Naive thymus-derived CD4-positive, alpha-beta T cell (primary cell): ENCODE measurements at regions of chr19 and their contacts with region 1.

Region 1: GRCh38 chr19:13212759-13213330 is 62.6 kb downstream of the IER2 start:
- DNase-seq: peak; percentile 47 to 72 (median 69)
- ATAC-seq: peak; percentile 58
- H3K4me3 ChIP-seq: no peak overlapping the region
- H3K4me3 Mint-ChIP-seq: peak overlapping the region in 6 of 10 donors; percentile 2 to 41 (median 20)
- H3K27ac ChIP-seq: no peak overlapping the region
- H3K27ac Mint-ChIP-seq: peak overlapping the region; percentile 5 to 85 (median 65)
- H3K4me1 ChIP-seq: peaks cover 0 to 6% of the 10 kb centered on the region in 2 donors
- H3K4me1 Mint-ChIP-seq: peaks cover 14 to 31% (median 26%) of the 10 kb centered on the region in 7 donors
- H3K27me3 ChIP-seq: no peaks in the 10 kb centered on the region
- H3K27me3 Mint-ChIP-seq: no peaks in the 10 kb centered on the region

Region 2: DNA sequence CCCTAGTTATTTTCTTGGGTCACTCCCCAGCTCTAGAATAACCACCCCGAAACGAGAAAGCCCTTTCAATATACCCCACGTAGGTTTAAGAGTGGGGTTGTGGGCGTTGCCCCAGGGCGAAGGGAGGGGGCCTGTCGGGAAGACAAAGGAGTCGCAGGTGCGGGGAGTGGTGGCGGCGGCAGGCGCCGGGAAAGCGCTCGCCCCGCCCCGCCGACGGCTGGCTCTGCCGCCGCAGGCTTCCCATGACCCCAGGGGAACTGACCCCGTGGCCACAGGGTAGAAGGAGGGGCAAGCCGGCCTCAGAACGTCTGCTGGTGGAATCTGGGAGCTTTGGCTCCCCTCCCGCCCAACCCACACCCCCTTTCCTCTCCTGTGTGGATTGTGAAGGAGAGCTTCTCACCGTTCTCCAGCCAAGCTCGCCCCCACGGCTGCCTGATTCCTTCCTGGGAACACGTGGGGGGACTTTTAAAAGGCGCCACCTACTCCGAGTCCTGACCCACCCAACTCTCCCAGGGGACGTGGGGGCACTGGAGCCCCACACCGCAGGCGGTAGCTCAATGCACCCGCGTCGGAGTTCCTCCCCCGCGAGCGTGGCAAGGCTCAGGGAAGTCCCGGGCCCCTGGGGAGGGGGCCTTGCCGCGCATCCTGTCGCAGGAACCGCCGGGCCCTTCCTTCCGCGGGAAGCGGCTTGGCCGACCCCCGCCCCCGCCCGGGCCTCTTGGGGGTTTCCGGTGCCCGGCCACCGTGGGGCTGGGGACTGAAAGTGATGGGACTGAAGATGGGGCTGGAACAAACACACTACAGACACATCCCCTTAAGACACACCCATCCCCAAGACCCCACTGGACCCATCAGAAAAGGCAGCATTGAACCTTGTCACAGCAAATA is 57.1 kb before region 1 on chr19:
- CTCF ChIA-PET with region 1: interaction called, 8 read pairs
- POLR2A ChIA-PET with region 1: interaction called, 35 read pairs
- intact Hi-C with region 1: loop called (anchors 1 kb)
- DNase-seq: peak; percentile 65 to 86 (median 75)
- ATAC-seq: peak; percentile 43
- H3K4me3 ChIP-seq: peak overlapping the region; percentile 96
- H3K4me3 Mint-ChIP-seq: peak overlapping the region; percentile 94 to 100 (median 98)
- H3K27ac ChIP-seq: peak overlapping the region; percentile 96
- H3K27ac Mint-ChIP-seq: peak overlapping the region; percentile 97 to 100 (median 99)
- H3K4me1 ChIP-seq: peaks cover 14 to 29% of the 10 kb centered on the region in 2 donors
- H3K4me1 Mint-ChIP-seq: peaks cover 22 to 63% (median 39%) of the 10 kb centered on the region in 7 donors
- H3K27me3 ChIP-seq: no peaks in the 10 kb centered on the region
- H3K27me3 Mint-ChIP-seq: peaks cover 0 to 17% (median 0%) of the 10 kb centered on the region in 5 donors

Region 3: GRCh38 chr19:13162518-13163314 is 50.1 kb before region 1 on chr19:
- CTCF ChIA-PET with region 1: interaction called, 6 read pairs
- POLR2A ChIA-PET with region 1: interaction called, 6 read pairs
- intact Hi-C with region 1: loop called in 1 of 2 experiments (anchors 1 kb)
- DNase-seq: peak; percentile 46 to 91 (median 75)
- ATAC-seq: peak; percentile 73
- H3K4me3 ChIP-seq: peak overlapping the region; percentile 60
- H3K4me3 Mint-ChIP-seq: peak overlapping the region; percentile 85 to 94 (median 90)
- H3K27ac ChIP-seq: peak overlapping the region; percentile 90
- H3K27ac Mint-ChIP-seq: peak overlapping the region; percentile 92 to 99 (median 97)
- H3K4me1 ChIP-seq: peaks cover 54 to 73% of the 10 kb centered on the region in 2 donors
- H3K4me1 Mint-ChIP-seq: peaks cover 26 to 87% (median 67%) of the 10 kb centered on the region in 7 donors
- H3K27me3 ChIP-seq: no peaks in the 10 kb centered on the region
- H3K27me3 Mint-ChIP-seq: no peaks in the 10 kb centered on the region

Region 4: DNA sequence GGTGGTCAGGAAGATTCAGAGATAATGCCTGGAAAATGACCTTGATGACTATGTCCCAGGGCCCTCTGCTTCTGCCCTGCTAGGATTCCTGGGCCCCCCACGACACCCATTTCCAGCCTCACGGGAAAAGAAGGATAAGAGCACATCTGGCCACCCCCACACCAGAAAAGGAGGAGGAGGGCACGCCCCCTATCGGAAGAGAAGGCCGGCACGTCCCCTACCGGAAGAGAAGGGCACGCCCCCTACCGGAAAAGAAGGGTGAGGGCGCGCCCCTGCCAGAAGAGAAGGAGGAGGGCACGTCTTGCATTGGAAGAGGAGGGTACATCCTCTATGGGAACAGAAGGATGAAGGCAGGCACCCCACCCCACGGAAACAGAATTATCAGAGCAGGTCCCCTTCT is 21.7 kb after region 1 on chr19:
- CTCF ChIA-PET with region 1: no interaction called
- POLR2A ChIA-PET with region 1: interaction called, 3 read pairs
- intact Hi-C with region 1: loop called in 1 of 2 experiments (anchors 1 kb)
- DNase-seq: peak in 8 of 9 donors; percentile 16 to 74 (median 50)
- ATAC-seq: peak; percentile 91
- H3K4me3 ChIP-seq: peak overlapping the region; percentile 35
- H3K4me3 Mint-ChIP-seq: peak overlapping the region; percentile 5 to 82 (median 59)
- H3K27ac ChIP-seq: no peak overlapping the region
- H3K27ac Mint-ChIP-seq: peak overlapping the region in 6 of 9 donors; percentile 4 to 88 (median 66)
- H3K4me1 ChIP-seq: peaks cover 9 to 15% of the 10 kb centered on the region in 2 donors
- H3K4me1 Mint-ChIP-seq: peaks cover 14 to 22% (median 15%) of the 10 kb centered on the region in 7 donors
- H3K27me3 ChIP-seq: no peaks in the 10 kb centered on the region
- H3K27me3 Mint-ChIP-seq: peaks cover 0 to 6% (median 0%) of the 10 kb centered on the region in 5 donors

Region 5: DNA sequence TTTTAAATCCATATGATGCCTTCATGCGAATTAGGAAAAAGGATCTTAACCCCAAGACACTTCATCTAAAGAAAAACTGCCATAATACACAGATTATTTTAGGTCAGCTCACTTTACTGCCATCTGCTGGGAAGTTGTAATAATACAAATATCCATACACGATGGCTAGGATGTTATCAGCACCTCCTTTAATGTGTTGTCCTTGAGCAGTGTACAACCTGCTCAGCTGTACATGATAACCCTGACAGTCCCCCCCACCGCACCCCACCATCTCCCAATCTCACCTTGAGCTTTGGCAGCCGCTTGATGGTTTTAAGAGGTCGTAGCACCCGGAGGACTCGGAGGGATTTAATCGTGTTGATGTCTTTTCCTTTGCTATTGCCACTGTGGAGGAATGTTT is 49.6 kb after region 1 on chr19:
- CTCF ChIA-PET with region 1: no interaction called
- POLR2A ChIA-PET with region 1: interaction called, 3 read pairs
- intact Hi-C with region 1: loop called (anchors 1 to 5 kb)
- DNase-seq: peak in 6 of 9 donors; percentile 21 to 61 (median 52)
- ATAC-seq: peak; percentile 73
- H3K4me3 ChIP-seq: no peak overlapping the region
- H3K4me3 Mint-ChIP-seq: no peak overlapping the region
- H3K27ac ChIP-seq: no peak overlapping the region
- H3K27ac Mint-ChIP-seq: peak overlapping the region in 3 of 9 donors; percentile 5 to 84 (median 47)
- H3K4me1 ChIP-seq: no peaks in the 10 kb centered on the region
- H3K4me1 Mint-ChIP-seq: peaks cover 0 to 15% (median 0%) of the 10 kb centered on the region in 7 donors
- H3K27me3 ChIP-seq: no peaks in the 10 kb centered on the region
- H3K27me3 Mint-ChIP-seq: peaks cover 0 to 21% (median 10%) of the 10 kb centered on the region in 5 donors